GM12878 (cell line): ENCODE measurements at regions of chr7 and their contacts with region 1.

Region 1: DNA sequence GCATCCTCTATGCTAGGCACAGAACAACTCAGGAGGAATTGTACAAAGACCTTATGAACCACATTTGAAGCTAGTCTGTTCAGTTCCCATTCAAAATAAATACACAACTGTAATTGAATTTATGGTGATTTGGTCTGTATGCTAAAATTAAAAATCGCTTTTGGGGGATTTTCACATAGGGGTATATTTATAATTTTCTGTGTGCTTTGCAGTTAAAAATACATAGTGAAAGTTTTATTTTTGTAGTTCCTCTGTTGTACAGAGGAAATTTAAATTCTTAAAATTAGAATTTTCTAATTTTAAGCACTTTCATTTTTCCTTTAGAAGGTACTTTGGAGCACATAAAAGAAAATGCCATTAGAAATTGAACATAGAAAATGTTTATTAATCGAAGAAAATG is 6.9 kb downstream of the RABGEF1 start:
- DNase-seq: no peak
- ATAC-seq: no peak
- H3K4me3 ChIP-seq: peak overlapping the region; percentile 18; the same call in 1 of the 2 replicates
- H3K27ac ChIP-seq: peak overlapping the region; percentile 48
- H3K4me1 ChIP-seq: peaks cover 57% of the 10 kb centered on the region
- H3K27me3 ChIP-seq: no peaks in the 10 kb centered on the region
- CTCF ChIP-seq: no peak
- EP300 ChIP-seq: no peak
- POLR2A ChIP-seq: no peak
- RAD21 ChIP-seq: no peak

Region 2: GRCh38 chr7:66768865-66769832 is 21.8 kb after region 1 on chr7:
- CTCF ChIA-PET with region 1: interaction called, 3 read pairs
- POLR2A ChIA-PET with region 1: interaction called, 3 read pairs
- RAD21 ChIA-PET with region 1: no interaction called
- SMC1A ChIA-PET with region 1: interaction called, 10 read pairs
- in situ Hi-C with region 1: no loop called
- intact Hi-C with region 1: no loop called
- DNase-seq: no peak
- ATAC-seq: peak; percentile 62
- H3K4me3 ChIP-seq: no peak overlapping the region
- H3K27ac ChIP-seq: peak overlapping the region; percentile 46
- H3K4me1 ChIP-seq: peaks cover 20% of the 10 kb centered on the region
- H3K27me3 ChIP-seq: no peaks in the 10 kb centered on the region
- CTCF ChIP-seq: no peak
- EP300 ChIP-seq: no peak
- POLR2A ChIP-seq: no peak
- RAD21 ChIP-seq: no peak

Region 3: GRCh38 chr7:66832531-66833351 is 85.4 kb after region 1 on chr7:
- CTCF ChIA-PET with region 1: no interaction called
- POLR2A ChIA-PET with region 1: no interaction called
- RAD21 ChIA-PET with region 1: no interaction called
- SMC1A ChIA-PET with region 1: no interaction called
- in situ Hi-C with region 1: no loop called
- intact Hi-C with region 1: no loop called
- DNase-seq: no peak
- ATAC-seq: no peak
- H3K4me3 ChIP-seq: no peak overlapping the region
- H3K27ac ChIP-seq: no peak overlapping the region
- H3K4me1 ChIP-seq: no peaks in the 10 kb centered on the region
- H3K27me3 ChIP-seq: no peaks in the 10 kb centered on the region
- CTCF ChIP-seq: no peak
- EP300 ChIP-seq: no peak
- POLR2A ChIP-seq: no peak
- RAD21 ChIP-seq: no peak